ENCODE measurements at regions of chr20 and their contacts with region 1.

Region 1: GRCh38 chr20:51639206-51639832 is 96.8 kb upstream of the NFATC2 start:
- DNase-seq: peak; percentile 81
- ATAC-seq: peak; percentile 49
- H3K4me3 Mint-ChIP-seq: no peak overlapping the region
- H3K27ac Mint-ChIP-seq: no peak overlapping the region
- H3K4me1 Mint-ChIP-seq: peaks cover 9% of the 10 kb centered on the region
- H3K27me3 Mint-ChIP-seq: peaks cover 4% of the 10 kb centered on the region

Region 2: GRCh38 chr20:51966291-51966971 is 327.1 kb after region 1 on chr20:
- CTCF ChIA-PET with region 1: interaction called, 4 read pairs
- POLR2A ChIA-PET with region 1: no interaction called
- intact Hi-C with region 1: loop called (anchors 1 kb)
- DNase-seq: peak; percentile 25
- ATAC-seq: no peak
- H3K4me3 Mint-ChIP-seq: no peak overlapping the region
- H3K27ac Mint-ChIP-seq: no peak overlapping the region
- H3K4me1 Mint-ChIP-seq: no peaks in the 10 kb centered on the region
- H3K27me3 Mint-ChIP-seq: peaks cover 3% of the 10 kb centered on the region

Measured in activated CD4-positive, alpha-beta T cell treated with anti-CD3 and anti-CD28 coated beads for 36 hours (primary cell).